GM12878 (cell line): ENCODE measurements at regions of chr11 and their contacts with region 1.

Region 1: DNA sequence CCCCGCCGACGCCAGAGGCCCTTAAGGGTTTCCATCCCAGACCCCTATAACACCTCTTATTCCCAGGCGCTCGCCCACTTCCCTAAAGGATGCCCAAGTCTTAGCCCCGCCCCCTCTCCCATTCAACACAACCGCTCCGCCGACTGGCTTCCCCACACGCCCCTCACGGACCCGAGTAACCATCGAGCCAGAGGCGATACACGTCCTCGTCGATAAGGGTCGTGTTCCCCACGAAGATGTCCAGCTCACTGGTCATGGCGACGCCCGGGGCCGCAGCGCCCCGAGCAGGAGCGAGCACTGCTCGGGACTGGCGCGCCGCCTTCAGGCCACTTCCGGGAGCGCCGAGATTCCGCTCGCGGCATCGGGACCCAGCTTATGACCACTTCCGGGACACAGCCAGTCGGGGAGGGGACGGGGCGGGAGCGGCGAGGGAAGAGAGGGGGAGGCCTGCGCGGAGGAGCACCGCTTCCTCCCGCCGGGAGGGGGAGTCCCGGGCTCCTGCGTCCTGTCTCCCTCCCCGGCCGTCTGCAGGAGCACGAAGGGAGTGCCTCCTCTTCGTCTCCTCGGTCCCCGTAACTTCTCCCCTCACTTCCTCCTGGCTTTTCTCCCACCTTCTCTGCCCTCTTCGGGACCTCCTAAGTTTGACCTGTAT is at the start of gene FIBP:
- DNase-seq: peak; percentile 83
- ATAC-seq: peak; percentile 69
- H3K4me3 ChIP-seq: peak within 1 kb of the TSS; percentile 90
- H3K27ac ChIP-seq: peak within 1 kb of the TSS; percentile 84
- H3K4me1 ChIP-seq: peaks cover 29% of the 10 kb centered on the region
- H3K27me3 ChIP-seq: no peaks in the 10 kb centered on the region
- CTCF ChIP-seq: peak; percentile 78 to 84 (median 80)
- EP300 ChIP-seq: peak in 1 of 2 experiments; percentile 46; a peak in 1 of 4 replicates
- POLR2A ChIP-seq: peak; percentile 96
- RAD21 ChIP-seq: peak; percentile 45
- polyA plus RNA-seq, gene FIBP: 65.1 to 80.7 TPM

Region 2: GRCh38 chr11:65637794-65638317 is 250.4 kb before region 1 on chr11 and contains the start of gene SIPA1:
- CTCF ChIA-PET with region 1: no interaction called
- POLR2A ChIA-PET with region 1: interaction called, 14 read pairs
- RAD21 ChIA-PET with region 1: no interaction called
- SMC1A ChIA-PET with region 1: no interaction called
- in situ Hi-C with region 1: no loop called
- intact Hi-C with region 1: no loop called
- DNase-seq: no peak
- ATAC-seq: peak; percentile 59
- H3K4me3 ChIP-seq: peak within 1 kb of the TSS; percentile 85
- H3K27ac ChIP-seq: peak within 1 kb of the TSS; percentile 89
- H3K4me1 ChIP-seq: peaks cover 34% of the 10 kb centered on the region
- H3K27me3 ChIP-seq: no peaks in the 10 kb centered on the region
- CTCF ChIP-seq: peak in 2 of 3 experiments; percentile 31 to 43; a peak in 4 of 6 replicates
- EP300 ChIP-seq: no peak
- POLR2A ChIP-seq: peak; percentile 81
- RAD21 ChIP-seq: no peak
- polyA plus RNA-seq, gene SIPA1: 1.0 to 5.5 TPM

Region 3: GRCh38 chr11:65833297-65834030 is 54.8 kb before region 1 on chr11 and contains the start of gene SNX32:
- CTCF ChIA-PET with region 1: interaction called, 13 read pairs
- POLR2A ChIA-PET with region 1: interaction called, 11 read pairs
- RAD21 ChIA-PET with region 1: interaction called, 4 read pairs
- SMC1A ChIA-PET with region 1: no interaction called
- in situ Hi-C with region 1: no loop called
- intact Hi-C with region 1: no loop called
- DNase-seq: peak; percentile 73
- ATAC-seq: peak; percentile 100
- H3K4me3 ChIP-seq: peak within 1 kb of the TSS; percentile 64
- H3K27ac ChIP-seq: peak within 1 kb of the TSS; percentile 52; the same call in 1 of the 2 replicates
- H3K4me1 ChIP-seq: peaks cover 15% of the 10 kb centered on the region
- H3K27me3 ChIP-seq: peaks cover 0 to 7% of the 10 kb centered on the region in 2 experiments; a peak in 1 of 4 replicates
- CTCF ChIP-seq: no peak
- EP300 ChIP-seq: no peak
- POLR2A ChIP-seq: peak; percentile 40; the same call in 1 of the 2 replicates
- RAD21 ChIP-seq: no peak
- polyA plus RNA-seq, gene SNX32: 0.04 to 0.06 TPM

Region 4: DNA sequence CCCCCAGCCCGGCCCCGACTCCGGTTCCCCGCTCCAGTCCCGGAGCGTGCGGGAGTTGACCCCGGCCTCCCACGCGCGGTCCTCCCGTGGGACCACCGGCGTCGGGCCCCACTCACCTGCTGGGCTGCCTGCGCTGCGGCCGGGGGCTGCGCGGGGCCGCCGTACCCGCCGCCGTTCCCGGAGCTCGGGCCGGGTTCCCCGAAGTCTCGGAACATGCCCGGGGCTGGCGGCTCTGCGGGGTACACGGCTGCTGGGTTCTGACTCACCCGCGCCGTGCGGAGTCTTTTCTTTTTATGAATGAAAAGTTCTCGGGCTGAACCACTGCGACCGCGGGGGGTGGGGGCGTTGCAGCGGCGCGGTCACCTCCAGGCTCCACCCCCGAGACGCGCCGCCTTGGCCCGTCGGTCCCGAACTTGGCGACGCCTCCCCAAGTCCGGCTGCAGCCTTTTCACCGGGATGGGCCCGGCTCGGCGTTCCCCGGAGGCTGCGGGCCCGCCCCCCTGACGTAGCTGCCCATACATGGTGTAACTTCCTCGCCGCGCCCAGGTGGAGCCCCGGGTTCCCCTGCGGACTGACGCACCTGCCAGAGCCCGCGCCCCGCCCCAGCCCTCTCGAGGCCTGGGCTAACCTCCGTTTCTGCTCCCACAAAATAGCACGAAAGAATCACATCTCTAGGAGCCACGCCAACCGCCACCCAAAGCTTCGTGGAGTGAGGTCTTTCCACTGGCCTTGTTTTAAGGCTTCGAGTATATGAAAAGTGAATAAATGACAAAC is 12.0 kb after region 1 on chr11 and contains the start of gene FOSL1:
- CTCF ChIA-PET with region 1: interaction called, 67 read pairs
- POLR2A ChIA-PET with region 1: interaction called, 67 read pairs
- RAD21 ChIA-PET with region 1: interaction called, 23 read pairs
- SMC1A ChIA-PET with region 1: interaction called, 47 read pairs
- in situ Hi-C with region 1: no loop called
- intact Hi-C with region 1: no loop called
- DNase-seq: peak; percentile 57
- ATAC-seq: peak; percentile 89
- H3K4me3 ChIP-seq: peak within 1 kb of the TSS; percentile 84
- H3K27ac ChIP-seq: peak within 1 kb of the TSS; percentile 9; the same call in 1 of the 2 replicates
- H3K4me1 ChIP-seq: 0 out of 2 replicates have a peak, but pooled peaks cover 6% of the 10 kb centered on the region
- H3K27me3 ChIP-seq: no peaks in the 10 kb centered on the region; a peak in 1 of 4 replicates
- CTCF ChIP-seq: no peak
- EP300 ChIP-seq: 0 out of 4 replicates have a peak, but pooled peaks of 1 of the 2 experiments have one; percentile 8
- POLR2A ChIP-seq: peak; percentile 73
- RAD21 ChIP-seq: no peak
- polyA plus RNA-seq, gene FOSL1: 0.82 to 0.90 TPM

Region 5: DNA sequence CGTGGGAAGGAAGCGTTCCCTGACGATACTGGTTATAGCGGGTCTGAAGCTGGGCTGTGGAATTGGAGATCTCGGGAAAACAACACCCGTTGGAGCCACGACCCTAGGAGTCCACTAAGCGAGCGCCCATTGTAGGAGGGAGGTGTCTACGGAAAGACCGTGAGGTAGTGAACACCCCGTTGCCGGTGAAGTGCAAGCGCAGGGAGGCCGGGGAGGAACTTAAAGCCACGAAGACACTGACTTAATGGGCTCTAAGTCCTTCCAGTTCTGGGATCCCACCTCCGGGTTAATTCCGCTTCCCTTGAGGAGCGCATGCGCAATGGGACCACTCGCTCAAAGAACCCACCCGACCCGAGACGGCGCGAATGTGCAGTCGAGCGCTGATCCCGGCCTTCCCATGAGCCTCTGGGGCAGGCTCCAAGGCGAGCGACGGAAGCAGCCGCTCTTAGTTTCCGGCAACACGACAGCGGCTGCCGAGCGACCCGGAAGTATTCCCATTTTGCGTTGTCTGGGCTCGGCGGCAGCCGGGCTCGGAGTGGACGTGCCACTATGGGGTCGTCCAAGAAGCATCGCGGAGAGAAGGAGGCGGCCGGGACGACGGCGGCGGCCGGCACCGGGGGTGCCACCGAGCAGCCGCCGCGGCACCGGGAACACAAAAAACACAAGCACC is 73.1 kb after region 1 on chr11 and contains the start of gene SART1:
- CTCF ChIA-PET with region 1: interaction called, 30 read pairs
- POLR2A ChIA-PET with region 1: interaction called, 9 read pairs
- RAD21 ChIA-PET with region 1: interaction called, 8 read pairs
- SMC1A ChIA-PET with region 1: interaction called, 5 read pairs
- in situ Hi-C with region 1: no loop called
- intact Hi-C with region 1: loop called (anchors 1 kb)
- DNase-seq: peak; percentile 94
- ATAC-seq: peak; percentile 95
- H3K4me3 ChIP-seq: peak within 1 kb of the TSS; percentile 95
- H3K27ac ChIP-seq: peak within 1 kb of the TSS; percentile 96
- H3K4me1 ChIP-seq: peaks cover 16% of the 10 kb centered on the region
- H3K27me3 ChIP-seq: no peaks in the 10 kb centered on the region
- CTCF ChIP-seq: no peak
- EP300 ChIP-seq: no peak
- POLR2A ChIP-seq: peak; percentile 92
- RAD21 ChIP-seq: no peak
- polyA plus RNA-seq, gene SART1: 6.2 to 14.8 TPM

Region 6: DNA sequence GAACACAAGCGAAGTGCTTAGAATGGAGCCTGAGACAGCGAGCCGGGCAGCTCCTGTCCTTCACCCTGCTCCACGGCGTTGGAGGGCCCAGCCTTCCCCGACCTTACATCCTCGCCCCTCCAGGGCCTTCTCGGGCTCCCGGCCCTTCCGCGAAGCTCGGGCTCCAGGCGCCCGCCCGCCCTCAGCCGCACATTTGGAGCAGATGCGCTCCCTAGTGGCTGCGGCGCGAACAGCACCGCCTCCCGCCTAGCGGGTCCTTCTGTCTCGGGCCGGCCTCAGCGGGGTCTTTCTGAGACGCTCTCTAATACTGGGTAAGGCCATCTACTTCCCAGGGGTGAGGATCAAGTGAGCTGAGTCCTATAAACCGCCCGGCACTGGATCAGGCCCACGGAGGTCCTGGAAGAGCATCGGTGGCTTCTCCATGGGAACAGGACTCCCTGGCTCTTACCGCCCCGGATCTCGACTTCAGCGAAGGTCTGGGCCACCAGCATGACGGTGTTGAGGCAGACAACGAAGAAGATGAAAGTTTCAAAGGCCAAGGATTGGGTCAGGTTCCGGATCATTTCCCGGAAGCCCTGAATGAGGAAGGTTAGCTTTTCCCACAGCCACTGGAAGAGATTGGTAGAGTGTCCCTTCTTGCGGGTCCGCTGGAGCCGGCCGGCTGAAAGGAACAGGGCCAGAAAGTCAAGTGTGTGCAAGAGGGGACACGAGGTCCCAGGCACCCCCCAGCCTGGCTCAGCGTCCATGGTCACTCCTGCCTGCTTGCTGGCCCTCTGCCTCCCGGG is 134.3 kb after region 1 on chr11:
- CTCF ChIA-PET with region 1: interaction called, 25 read pairs
- POLR2A ChIA-PET with region 1: interaction called, 3 read pairs
- RAD21 ChIA-PET with region 1: interaction called, 6 read pairs
- SMC1A ChIA-PET with region 1: interaction called, 5 read pairs
- in situ Hi-C with region 1: no loop called
- intact Hi-C with region 1: no loop called
- DNase-seq: no peak
- ATAC-seq: peak; percentile 95
- H3K4me3 ChIP-seq: no peak overlapping the region
- H3K27ac ChIP-seq: no peak overlapping the region
- H3K4me1 ChIP-seq: no peaks in the 10 kb centered on the region
- H3K27me3 ChIP-seq: 0 out of 4 replicates have a peak, but pooled peaks cover 0 to 3% of the 10 kb centered on the region in 2 experiments
- CTCF ChIP-seq: peak; percentile 84 to 97 (median 91)
- EP300 ChIP-seq: no peak
- POLR2A ChIP-seq: no peak
- RAD21 ChIP-seq: peak; percentile 60

Region 7: GRCh38 chr11:66106786-66107599 is 218.7 kb after region 1 on chr11:
- CTCF ChIA-PET with region 1: no interaction called
- POLR2A ChIA-PET with region 1: no interaction called
- RAD21 ChIA-PET with region 1: no interaction called
- SMC1A ChIA-PET with region 1: no interaction called
- in situ Hi-C with region 1: no loop called
- intact Hi-C with region 1: no loop called
- DNase-seq: no peak
- ATAC-seq: no peak
- H3K4me3 ChIP-seq: no peak overlapping the region
- H3K27ac ChIP-seq: peak overlapping the region; percentile 40; the same call in 1 of the 2 replicates
- H3K4me1 ChIP-seq: peaks cover 55% of the 10 kb centered on the region
- H3K27me3 ChIP-seq: no peaks in the 10 kb centered on the region
- CTCF ChIP-seq: no peak
- EP300 ChIP-seq: no peak
- POLR2A ChIP-seq: no peak
- RAD21 ChIP-seq: no peak

Region 8: DNA sequence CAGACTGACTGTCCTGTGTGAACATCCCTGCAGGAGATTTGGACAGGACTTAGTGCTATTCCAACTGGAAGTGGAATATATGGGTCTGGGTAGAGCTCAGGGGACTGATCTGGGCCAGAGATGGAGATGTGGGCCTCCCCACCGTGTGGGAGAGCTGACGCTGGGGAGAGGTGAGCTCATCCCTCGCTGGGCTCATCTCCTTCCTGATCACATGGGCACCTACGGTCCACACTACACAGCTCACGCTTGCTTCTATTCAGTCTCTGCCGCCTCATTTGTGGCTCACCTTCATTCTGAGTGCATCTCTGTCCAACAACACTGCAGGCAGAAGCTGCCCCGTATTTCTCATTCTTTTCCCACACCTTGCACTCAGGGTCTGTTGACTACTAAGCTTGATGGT is 363.5 kb after region 1 on chr11:
- CTCF ChIA-PET with region 1: no interaction called
- POLR2A ChIA-PET with region 1: no interaction called
- RAD21 ChIA-PET with region 1: no interaction called
- SMC1A ChIA-PET with region 1: no interaction called
- in situ Hi-C with region 1: no loop called
- intact Hi-C with region 1: no loop called
- DNase-seq: no peak
- ATAC-seq: no peak
- H3K4me3 ChIP-seq: no peak overlapping the region
- H3K27ac ChIP-seq: no peak overlapping the region
- H3K4me1 ChIP-seq: no peaks in the 10 kb centered on the region
- H3K27me3 ChIP-seq: no peaks in the 10 kb centered on the region
- CTCF ChIP-seq: no peak
- EP300 ChIP-seq: no peak
- POLR2A ChIP-seq: 0 out of 2 replicates have a peak, but pooled peaks have one; percentile 21
- RAD21 ChIP-seq: no peak